ENCODE measurements at regions of chr2 and their contacts with region 1.

Region 1: GRCh38 chr2:176126929-176127773 is 2.4 kb upstream of the HOXD8 start:
- DNase-seq: peak; percentile 67
- H3K4me3 Mint-ChIP-seq: no peak overlapping the region
- H3K27ac Mint-ChIP-seq: no peak overlapping the region
- H3K4me1 Mint-ChIP-seq: peaks cover 28% of the 10 kb centered on the region
- H3K27me3 Mint-ChIP-seq: peaks cover 74% of the 10 kb centered on the region

Region 2: GRCh38 chr2:176096986-176097819 is 29.9 kb before region 1 on chr2:
- CTCF ChIA-PET with region 1: interaction called, 17 read pairs
- POLR2A ChIA-PET with region 1: no interaction called
- intact Hi-C with region 1: no loop called
- DNase-seq: peak; percentile 70
- H3K4me3 Mint-ChIP-seq: peak overlapping the region; percentile 57
- H3K27ac Mint-ChIP-seq: peak overlapping the region; percentile 14
- H3K4me1 Mint-ChIP-seq: peaks cover 18% of the 10 kb centered on the region
- H3K27me3 Mint-ChIP-seq: peaks cover 84% of the 10 kb centered on the region

Region 3: DNA sequence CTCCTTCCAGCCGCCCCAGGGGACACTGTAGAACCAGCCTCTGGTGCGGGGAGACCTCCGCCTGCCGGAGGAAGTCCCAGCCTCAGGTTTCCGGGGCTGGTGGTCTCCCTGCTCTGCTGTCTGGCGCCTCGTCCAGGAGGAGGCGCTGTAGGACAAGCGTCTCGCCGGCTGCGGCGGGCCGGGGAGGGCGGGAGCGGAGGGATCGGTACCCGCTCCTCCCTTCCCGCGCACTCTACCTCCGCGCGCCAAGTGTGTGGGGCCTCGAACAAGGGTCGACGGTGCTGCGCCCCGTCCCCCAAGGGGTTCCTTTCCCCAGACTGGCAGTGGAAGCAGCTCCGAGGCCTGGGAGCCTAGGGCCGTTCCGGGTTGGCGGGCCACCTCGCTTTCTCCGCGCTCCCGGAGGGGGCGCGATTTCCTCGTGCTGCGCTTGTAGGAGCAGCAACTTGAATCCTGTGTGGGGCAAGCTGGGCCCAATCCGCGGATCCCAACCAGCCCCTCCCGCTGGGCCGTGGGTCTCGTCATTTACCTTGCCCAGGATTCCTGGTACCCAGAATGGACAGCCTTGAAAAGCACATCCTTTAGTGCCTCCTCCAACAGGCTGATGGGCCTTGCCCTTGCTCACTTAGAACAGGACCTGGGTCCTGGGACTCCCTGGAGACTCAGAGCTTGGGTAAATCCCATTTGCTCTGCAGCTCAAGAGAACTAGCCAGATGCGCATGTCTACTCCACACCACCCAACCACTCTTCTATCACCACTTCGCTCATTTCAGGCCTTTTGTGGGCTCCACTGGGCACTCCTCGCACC is 13.6 kb after region 1 on chr2:
- CTCF ChIA-PET with region 1: interaction called, 16 read pairs
- POLR2A ChIA-PET with region 1: no interaction called
- intact Hi-C with region 1: no loop called
- DNase-seq: peak; percentile 75
- H3K4me3 Mint-ChIP-seq: no peak overlapping the region
- H3K27ac Mint-ChIP-seq: no peak overlapping the region
- H3K4me1 Mint-ChIP-seq: peaks cover 15% of the 10 kb centered on the region
- H3K27me3 Mint-ChIP-seq: peaks cover 74% of the 10 kb centered on the region

Region 4: GRCh38 chr2:176454893-176455811 is 328.0 kb after region 1 on chr2:
- CTCF ChIA-PET with region 1: interaction called, 149 read pairs
- POLR2A ChIA-PET with region 1: no interaction called
- intact Hi-C with region 1: loop called (anchors 2 kb)
- DNase-seq: peak; percentile 86
- H3K4me3 Mint-ChIP-seq: no peak overlapping the region
- H3K27ac Mint-ChIP-seq: no peak overlapping the region
- H3K4me1 Mint-ChIP-seq: no peaks in the 10 kb centered on the region
- H3K27me3 Mint-ChIP-seq: peaks cover 19% of the 10 kb centered on the region

Region 5: DNA sequence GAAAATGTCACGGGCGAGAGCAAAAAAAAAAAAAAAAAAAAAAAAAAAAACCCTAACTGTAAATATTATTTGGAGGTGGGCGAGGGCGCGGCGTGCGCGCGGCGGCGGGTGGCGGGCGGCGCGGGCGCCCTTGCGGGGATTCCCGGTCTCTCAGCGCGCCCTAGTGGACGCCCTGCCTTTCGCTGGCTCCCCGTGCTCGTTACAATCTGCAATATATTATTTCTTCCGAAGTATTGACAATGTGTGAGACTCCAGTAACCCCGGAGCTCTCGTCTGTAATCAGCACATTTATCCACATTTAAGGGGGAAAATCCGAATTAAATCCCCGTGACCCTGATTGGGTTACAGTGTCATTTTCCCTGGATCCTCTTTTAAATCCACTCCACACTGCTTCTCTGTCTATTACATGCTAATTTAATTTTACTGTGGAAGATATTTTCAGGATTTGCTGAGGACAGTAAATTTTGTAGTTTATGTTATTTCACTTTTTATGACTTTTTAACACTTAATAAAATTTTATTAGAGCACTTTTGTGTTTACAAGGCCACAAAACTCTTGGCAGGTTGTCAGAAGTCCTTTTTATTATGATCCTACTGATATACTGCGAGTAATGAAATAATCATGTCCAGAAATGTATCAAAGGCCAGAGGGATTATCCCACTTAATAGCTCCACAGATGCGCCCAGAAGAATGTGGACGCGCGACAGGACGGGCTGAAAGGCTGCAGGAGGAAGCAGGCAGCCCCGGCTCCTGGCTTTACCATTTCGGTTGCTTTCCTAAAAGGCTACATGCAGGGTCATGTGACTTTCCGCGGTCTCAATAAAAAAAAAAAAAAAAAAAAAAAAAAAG is 511.2 kb after region 1 on chr2:
- CTCF ChIA-PET with region 1: interaction called, 26 read pairs
- POLR2A ChIA-PET with region 1: no interaction called
- intact Hi-C with region 1: loop called (anchors 1 kb)
- DNase-seq: peak; percentile 65
- H3K4me3 Mint-ChIP-seq: peak overlapping the region; percentile 58
- H3K27ac Mint-ChIP-seq: no peak overlapping the region
- H3K4me1 Mint-ChIP-seq: peaks cover 2% of the 10 kb centered on the region
- H3K27me3 Mint-ChIP-seq: peaks cover 45% of the 10 kb centered on the region

Region 6: GRCh38 chr2:176814306-176815052 is 687.3 kb after region 1 on chr2:
- CTCF ChIA-PET with region 1: interaction called, 6 read pairs
- POLR2A ChIA-PET with region 1: no interaction called
- intact Hi-C with region 1: loop called (anchors 2 kb)
- DNase-seq: no peak
- H3K4me3 Mint-ChIP-seq: no peak overlapping the region
- H3K27ac Mint-ChIP-seq: no peak overlapping the region
- H3K4me1 Mint-ChIP-seq: no peaks in the 10 kb centered on the region
- H3K27me3 Mint-ChIP-seq: no peaks in the 10 kb centered on the region

Measured in activated CD4-positive, alpha-beta memory T cell treated with anti-CD3 and anti-CD28 coated beads for 36 hours (primary cell).